ENCODE measurements at regions of chr4 and their contacts with region 1.

Region 1: GRCh38 chr4:168710353-168710946 is 213.6 kb downstream of the PALLD start:
- DNase-seq: no peak
- H3K4me3 Mint-ChIP-seq: no peak overlapping the region
- H3K27ac Mint-ChIP-seq: no peak overlapping the region
- H3K4me1 Mint-ChIP-seq: peaks cover 13% of the 10 kb centered on the region
- H3K27me3 Mint-ChIP-seq: peaks cover 4% of the 10 kb centered on the region

Region 2: GRCh38 chr4:168917138-168917779 is 206.8 kb after region 1 on chr4:
- intact Hi-C with region 1: loop called (anchors 1 kb)
- DNase-seq: no peak
- H3K4me3 Mint-ChIP-seq: no peak overlapping the region
- H3K27ac Mint-ChIP-seq: no peak overlapping the region
- H3K4me1 Mint-ChIP-seq: no peaks in the 10 kb centered on the region
- H3K27me3 Mint-ChIP-seq: peaks cover 2% of the 10 kb centered on the region

Measured in activated T-helper 1 cell treated with anti-CD3 and anti-CD28 coated beads, Interleukin-12 subunit alpha, Interleukin-12 subunit beta, Interleukin-2, Interleukin-4 antibody, amounts not matched to agents 30 ng/mL and 10 ng/mL and 1 ng/mL, durations not matched to agents 14 hours and 24 hours and 36 hours (primary cell).